Mammary epithelial cell (primary cell): ENCODE measurements at regions of chr15 and their contacts with region 1.

Region 1: GRCh38 chr15:76057332-76058000 is 2.3 kb upstream of the TMEM266 start:
- DNase-seq: peak; percentile 26
- H3K4me3 ChIP-seq: peak overlapping the region; percentile 30 to 61 (median 43)
- H3K27ac ChIP-seq: no peak overlapping the region
- H3K4me1 ChIP-seq: peaks cover 18% of the 10 kb centered on the region
- H3K27me3 ChIP-seq: peaks cover 9% of the 10 kb centered on the region
- CTCF ChIP-seq: peak; percentile 76

Region 2: DNA sequence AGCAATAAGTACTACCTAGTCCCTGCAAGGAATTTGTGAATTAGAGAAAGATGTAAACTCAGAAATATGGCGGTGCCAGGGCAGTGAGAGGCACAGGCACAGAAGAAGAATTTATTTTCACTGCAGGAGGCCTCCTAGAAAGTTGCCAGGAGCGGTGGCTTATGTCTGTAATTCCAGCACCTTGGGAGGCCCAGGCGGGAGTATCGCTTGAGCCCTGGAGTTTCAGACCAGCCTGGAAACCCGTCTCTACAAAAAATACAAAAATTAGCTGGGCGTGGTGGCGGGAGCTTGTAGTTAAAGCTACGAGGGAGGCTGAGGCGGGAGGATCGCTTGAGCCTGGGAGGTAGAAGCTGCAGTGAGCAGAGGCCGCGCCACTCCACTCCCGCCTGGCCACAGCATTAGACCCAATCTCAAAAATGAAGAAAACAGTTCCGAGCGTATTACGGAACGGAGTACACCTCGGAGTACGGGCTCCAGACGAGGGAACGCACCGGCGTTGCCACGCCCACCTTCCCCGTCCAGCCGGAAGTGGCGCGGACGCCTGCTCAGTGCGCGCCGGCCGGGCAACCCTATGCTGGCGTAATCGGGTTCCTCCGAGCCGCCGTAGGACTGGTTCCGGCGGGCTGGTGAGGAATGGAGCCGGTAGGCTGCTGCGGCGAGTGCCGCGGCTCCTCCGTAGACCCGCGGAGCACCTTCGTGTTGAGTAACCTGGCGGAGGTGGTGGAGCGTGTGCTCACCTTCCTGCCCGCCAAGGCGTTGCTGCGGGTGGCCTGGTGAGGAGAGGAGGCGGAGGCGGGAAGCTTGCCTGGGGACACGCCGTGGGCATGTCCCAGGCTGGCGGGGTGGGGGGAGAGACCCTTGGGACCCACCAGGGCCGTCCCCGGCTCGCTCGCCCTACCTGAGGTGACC is 153.9 kb before region 1 on chr15 and contains the start of gene FBXO22:
- CTCF ChIA-PET with region 1: no interaction called
- dilution Hi-C with region 1: no loop called
- in situ Hi-C with region 1: no loop called
- intact Hi-C with region 1: loop called (anchors 5 kb)
- DNase-seq: peak; percentile 94
- H3K4me3 ChIP-seq: peak within 1 kb of the TSS; percentile 79 to 99 (median 94)
- H3K27ac ChIP-seq: peak within 1 kb of the TSS; percentile 80
- H3K4me1 ChIP-seq: peaks cover 21% of the 10 kb centered on the region
- H3K27me3 ChIP-seq: no peaks in the 10 kb centered on the region
- CTCF ChIP-seq: no peak
- total RNA-seq, gene FBXO22: 64.5 to 76.2 TPM

Region 3: DNA sequence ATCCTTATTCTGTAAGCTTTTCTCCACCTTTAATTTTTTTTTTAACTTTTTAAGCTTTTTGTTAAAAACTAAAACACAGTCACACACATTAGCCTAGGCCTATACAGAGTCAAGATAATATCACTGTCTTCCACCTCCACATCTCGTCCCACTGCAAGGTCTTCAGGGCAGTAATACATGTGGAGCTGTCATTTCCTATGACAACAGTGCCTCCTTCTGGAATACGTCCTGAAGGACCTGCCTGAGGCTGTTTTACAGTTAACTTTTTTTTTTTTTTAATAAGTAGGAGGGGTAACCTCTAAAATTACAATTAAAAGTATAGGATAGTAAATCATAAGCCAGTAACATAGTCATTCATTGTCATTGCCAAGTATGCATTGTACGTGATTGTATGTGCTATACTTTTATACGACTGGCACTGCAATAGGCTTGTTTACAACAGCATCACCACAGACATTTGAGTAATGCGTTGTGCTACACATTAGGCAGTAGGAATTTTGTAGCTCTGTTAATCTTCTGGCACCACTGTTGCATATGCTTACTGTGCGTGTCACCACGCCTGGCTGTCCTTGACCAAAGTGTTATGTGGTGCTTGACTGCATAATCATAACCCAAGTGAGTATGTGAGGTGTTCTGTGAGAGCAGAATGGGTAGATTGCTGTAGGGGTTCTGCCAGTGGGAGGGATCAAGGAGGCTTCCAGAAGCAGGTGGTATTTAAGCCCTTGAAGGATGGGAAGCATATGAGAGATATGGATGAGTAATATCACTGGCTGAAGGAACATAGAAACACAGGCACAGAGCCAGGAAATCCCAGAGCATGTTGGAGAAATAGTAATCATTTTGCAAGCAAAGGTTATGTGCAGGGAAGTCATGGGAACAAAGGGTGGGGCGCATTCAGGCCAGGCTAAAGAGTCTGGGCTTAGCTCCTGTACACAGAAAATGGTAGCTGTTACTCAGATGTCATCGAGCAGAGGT is 135.4 kb before region 1 on chr15:
- CTCF ChIA-PET with region 1: no interaction called
- dilution Hi-C with region 1: no loop called
- in situ Hi-C with region 1: no loop called
- intact Hi-C with region 1: loop called (anchors 5 kb)
- DNase-seq: peak; percentile 78
- H3K4me3 ChIP-seq: no peak overlapping the region
- H3K27ac ChIP-seq: no peak overlapping the region
- H3K4me1 ChIP-seq: peaks cover 29% of the 10 kb centered on the region
- H3K27me3 ChIP-seq: no peaks in the 10 kb centered on the region
- CTCF ChIP-seq: peak; percentile 32 to 33

Region 4: GRCh38 chr15:75947092-75947491 is 110.4 kb before region 1 on chr15:
- CTCF ChIA-PET with region 1: no interaction called
- dilution Hi-C with region 1: no loop called
- in situ Hi-C with region 1: no loop called
- intact Hi-C with region 1: loop called (anchors 5 kb)
- DNase-seq: peak; percentile 94
- H3K4me3 ChIP-seq: no peak overlapping the region
- H3K27ac ChIP-seq: peak overlapping the region; percentile 79
- H3K4me1 ChIP-seq: peaks cover 31% of the 10 kb centered on the region
- H3K27me3 ChIP-seq: no peaks in the 10 kb centered on the region
- CTCF ChIP-seq: no peak

Region 5: DNA sequence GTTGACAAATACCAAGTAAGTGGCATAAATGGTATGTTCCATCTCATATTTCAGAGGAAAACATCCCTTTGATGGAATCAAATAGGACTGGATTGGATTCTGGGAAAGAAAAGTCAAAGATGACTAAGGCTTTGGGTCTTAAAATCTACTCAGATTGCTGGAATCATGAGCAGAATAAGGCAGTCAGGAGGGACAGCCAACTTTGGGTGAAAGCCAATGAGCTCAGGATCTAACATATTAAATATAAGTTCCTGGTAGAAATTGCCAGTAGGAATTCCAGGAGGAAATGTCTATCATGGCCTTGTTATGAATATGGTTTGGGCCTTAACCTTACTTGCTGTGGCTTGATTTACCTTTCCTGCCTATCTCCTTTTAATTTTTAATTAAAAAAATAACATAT is 334.4 kb after region 1 on chr15:
- CTCF ChIA-PET with region 1: no interaction called
- dilution Hi-C with region 1: no loop called
- in situ Hi-C with region 1: no loop called
- intact Hi-C with region 1: no loop called
- DNase-seq: no peak
- H3K4me3 ChIP-seq: no peak overlapping the region
- H3K27ac ChIP-seq: no peak overlapping the region
- H3K4me1 ChIP-seq: no peaks in the 10 kb centered on the region
- H3K27me3 ChIP-seq: no peaks in the 10 kb centered on the region
- CTCF ChIP-seq: no peak

Region 6: GRCh38 chr15:76866716-76867321 is 809.4 kb after region 1 on chr15:
- CTCF ChIA-PET with region 1: no interaction called
- dilution Hi-C with region 1: no loop called
- in situ Hi-C with region 1: no loop called
- intact Hi-C with region 1: loop called (anchors 5 kb)
- DNase-seq: peak; percentile 5
- H3K4me3 ChIP-seq: no peak overlapping the region
- H3K27ac ChIP-seq: no peak overlapping the region
- H3K4me1 ChIP-seq: no peaks in the 10 kb centered on the region
- H3K27me3 ChIP-seq: no peaks in the 10 kb centered on the region
- CTCF ChIP-seq: peak; percentile 30 to 51